Activated CD4-positive, alpha-beta memory T cell treated with anti-CD3 and anti-CD28 coated beads, Interleukin-2, amount 10 ng/mL, durations not matched to agents 7 days and 5 days (primary cell): ENCODE measurements at regions of chr16 and their contacts with region 1.

Region 1: GRCh38 chr16:31142109-31143010 is 6.8 kb upstream of the PRSS8 start:
- DNase-seq: peak; percentile 99
- H3K4me3 Mint-ChIP-seq: peak overlapping the region; percentile 61
- H3K27ac Mint-ChIP-seq: peak overlapping the region; percentile 50
- H3K4me1 Mint-ChIP-seq: peaks cover 20% of the 10 kb centered on the region
- H3K27me3 Mint-ChIP-seq: peaks cover 7% of the 10 kb centered on the region

Region 2: GRCh38 chr16:30941600-30942425 is 200.5 kb before region 1 on chr16:
- CTCF ChIA-PET with region 1: interaction called, 10 read pairs
- POLR2A ChIA-PET with region 1: no interaction called
- DNase-seq: peak; percentile 81
- H3K4me3 Mint-ChIP-seq: peak overlapping the region; percentile 64
- H3K27ac Mint-ChIP-seq: peak overlapping the region; percentile 68
- H3K4me1 Mint-ChIP-seq: peaks cover 38% of the 10 kb centered on the region
- H3K27me3 Mint-ChIP-seq: no peaks in the 10 kb centered on the region

Region 3: DNA sequence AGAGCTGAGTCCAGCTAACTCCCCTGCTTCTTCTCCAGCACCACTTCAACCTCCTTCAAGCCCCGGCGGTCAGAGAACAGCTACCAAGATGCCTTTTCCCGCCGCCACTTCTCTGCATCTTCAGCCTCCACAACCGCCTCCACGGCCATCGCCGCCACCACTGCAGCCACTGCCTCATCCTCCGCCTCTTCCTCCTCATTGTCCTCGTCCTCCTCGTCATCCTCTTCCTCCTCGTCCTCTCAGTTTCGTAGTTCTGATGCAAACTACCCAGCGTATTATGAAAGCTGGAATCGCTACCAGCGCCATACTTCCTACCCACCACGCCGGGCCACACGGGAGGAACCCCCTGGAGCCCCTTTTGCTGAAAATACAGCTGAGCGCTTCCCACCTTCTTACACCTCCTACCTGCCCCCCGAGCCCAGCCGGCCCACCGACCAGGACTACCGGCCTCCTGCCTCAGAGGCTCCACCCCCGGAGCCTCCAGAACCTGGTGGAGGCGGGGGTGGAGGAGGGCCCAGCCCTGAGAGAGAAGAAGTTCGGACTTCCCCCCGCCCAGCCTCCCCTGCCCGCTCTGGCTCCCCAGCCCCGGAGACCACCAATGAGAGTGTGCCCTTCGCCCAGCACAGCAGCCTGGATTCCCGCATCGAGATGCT is 177.7 kb before region 1 on chr16:
- CTCF ChIA-PET with region 1: no interaction called
- POLR2A ChIA-PET with region 1: no interaction called
- DNase-seq: no peak
- H3K4me3 Mint-ChIP-seq: no peak overlapping the region
- H3K27ac Mint-ChIP-seq: no peak overlapping the region
- H3K4me1 Mint-ChIP-seq: peaks cover 8% of the 10 kb centered on the region
- H3K27me3 Mint-ChIP-seq: no peaks in the 10 kb centered on the region

Region 4: DNA sequence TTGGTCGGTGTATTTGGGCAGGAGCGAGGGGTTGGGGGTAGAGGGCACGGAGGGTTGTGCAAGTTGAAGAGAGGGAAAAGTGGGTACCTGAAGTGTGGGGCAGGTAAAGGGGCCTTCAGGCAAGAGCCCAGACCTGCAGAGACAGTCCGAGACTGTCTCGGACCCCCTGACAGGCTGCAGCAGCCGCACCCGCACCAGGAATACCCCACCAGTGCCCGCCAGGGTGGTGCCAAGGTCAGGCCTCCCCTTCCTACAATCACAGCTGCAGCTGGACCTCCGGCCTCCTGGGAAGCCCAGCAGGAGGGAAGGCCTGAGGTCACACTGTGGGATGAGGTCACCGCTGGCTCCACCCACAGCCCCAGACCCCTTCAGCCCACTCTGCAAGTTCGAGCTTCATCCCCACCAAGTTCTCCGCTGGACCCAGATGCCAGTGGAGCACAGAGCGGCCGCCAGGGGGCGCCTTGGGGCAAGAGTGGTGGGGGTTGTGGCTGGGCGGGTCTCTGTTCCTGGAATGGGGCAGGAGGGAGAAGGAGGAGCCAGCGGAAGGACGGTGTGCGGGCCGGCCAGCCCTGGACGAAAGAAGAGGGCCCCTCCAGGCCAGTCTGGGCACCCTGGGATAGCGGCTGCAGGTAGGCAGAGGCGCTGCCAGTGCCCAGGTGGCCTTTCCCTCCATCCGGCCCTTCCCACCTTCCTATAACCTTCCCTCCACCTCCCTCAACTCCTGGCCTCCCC is 157.5 kb before region 1 on chr16 and contains the start of gene HSD3B7:
- CTCF ChIA-PET with region 1: interaction called, 36 read pairs
- POLR2A ChIA-PET with region 1: interaction called, 5 read pairs
- DNase-seq: peak; percentile 85
- H3K4me3 Mint-ChIP-seq: peak within 1 kb of the TSS; percentile 39
- H3K27ac Mint-ChIP-seq: no peak within 1 kb of the TSS
- H3K4me1 Mint-ChIP-seq: peaks cover 14% of the 10 kb centered on the region
- H3K27me3 Mint-ChIP-seq: no peaks in the 10 kb centered on the region
- total RNA-seq, gene HSD3B7: 7.1 to 7.5 TPM

Region 5: DNA sequence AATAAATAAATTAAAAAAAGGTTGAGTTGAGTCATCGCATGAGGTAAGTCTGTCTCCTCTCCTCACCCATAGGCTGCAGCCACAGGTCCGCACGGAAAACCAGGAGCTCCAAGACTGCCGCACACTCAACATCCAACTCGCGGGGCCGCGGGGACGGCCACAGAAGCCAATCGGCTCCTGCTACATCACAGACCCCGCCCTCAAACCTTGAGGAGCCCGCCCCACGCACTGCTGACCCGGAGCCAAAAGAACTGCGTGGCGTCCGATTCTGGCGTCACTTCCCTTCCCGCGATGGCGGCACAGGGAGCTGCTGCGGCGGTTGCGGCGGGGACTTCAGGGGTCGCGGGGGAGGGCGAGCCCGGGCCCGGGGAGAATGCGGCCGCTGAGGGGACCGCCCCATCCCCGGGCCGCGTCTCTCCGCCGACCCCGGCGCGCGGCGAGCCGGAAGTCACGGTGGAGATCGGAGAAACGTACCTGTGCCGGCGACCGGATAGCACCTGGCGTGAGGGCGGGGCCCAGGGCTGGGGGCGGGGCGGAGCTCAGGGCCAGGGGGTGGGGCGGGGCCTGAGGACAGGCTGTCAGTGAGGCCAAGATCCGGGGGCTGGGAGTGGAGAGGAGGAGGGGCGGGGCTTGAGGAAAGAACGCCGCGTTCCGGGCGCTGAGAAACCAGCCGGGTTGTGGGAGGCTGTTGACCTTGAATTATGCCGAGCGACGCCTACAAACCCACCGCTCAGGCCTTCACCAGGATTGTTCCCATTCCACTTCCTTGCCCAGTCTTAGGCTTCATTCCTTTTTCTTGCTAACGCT is 24.8 kb before region 1 on chr16 and contains the start of gene KAT8:
- CTCF ChIA-PET with region 1: interaction called, 71 read pairs
- POLR2A ChIA-PET with region 1: interaction called, 29 read pairs
- DNase-seq: peak; percentile 98
- H3K4me3 Mint-ChIP-seq: peak within 1 kb of the TSS; percentile 73
- H3K27ac Mint-ChIP-seq: peak within 1 kb of the TSS; percentile 78
- H3K4me1 Mint-ChIP-seq: peaks cover 32% of the 10 kb centered on the region
- H3K27me3 Mint-ChIP-seq: no peaks in the 10 kb centered on the region
- total RNA-seq, gene KAT8: 43.7 to 44.3 TPM

Region 6: GRCh38 chr16:31157136-31157535 is 14.8 kb after region 1 on chr16:
- CTCF ChIA-PET with region 1: interaction called, 37 read pairs
- POLR2A ChIA-PET with region 1: interaction called, 12 read pairs
- DNase-seq: no peak
- H3K4me3 Mint-ChIP-seq: no peak overlapping the region
- H3K27ac Mint-ChIP-seq: no peak overlapping the region
- H3K4me1 Mint-ChIP-seq: peaks cover 6% of the 10 kb centered on the region
- H3K27me3 Mint-ChIP-seq: peaks cover 15% of the 10 kb centered on the region